ENCODE measurements at regions of chr10 and their contacts with region 1.

Region 1: GRCh38 chr10:101214446-101215396 is 14.5 kb downstream of the LBX1 start:
- H3K4me3 ChIP-seq: no peak overlapping the region
- H3K27ac ChIP-seq: no peak overlapping the region
- H3K4me1 ChIP-seq: no peaks in the 10 kb centered on the region; the same call in 1 of the 2 replicates
- CTCF ChIP-seq: peak; percentile 94

Region 2: DNA sequence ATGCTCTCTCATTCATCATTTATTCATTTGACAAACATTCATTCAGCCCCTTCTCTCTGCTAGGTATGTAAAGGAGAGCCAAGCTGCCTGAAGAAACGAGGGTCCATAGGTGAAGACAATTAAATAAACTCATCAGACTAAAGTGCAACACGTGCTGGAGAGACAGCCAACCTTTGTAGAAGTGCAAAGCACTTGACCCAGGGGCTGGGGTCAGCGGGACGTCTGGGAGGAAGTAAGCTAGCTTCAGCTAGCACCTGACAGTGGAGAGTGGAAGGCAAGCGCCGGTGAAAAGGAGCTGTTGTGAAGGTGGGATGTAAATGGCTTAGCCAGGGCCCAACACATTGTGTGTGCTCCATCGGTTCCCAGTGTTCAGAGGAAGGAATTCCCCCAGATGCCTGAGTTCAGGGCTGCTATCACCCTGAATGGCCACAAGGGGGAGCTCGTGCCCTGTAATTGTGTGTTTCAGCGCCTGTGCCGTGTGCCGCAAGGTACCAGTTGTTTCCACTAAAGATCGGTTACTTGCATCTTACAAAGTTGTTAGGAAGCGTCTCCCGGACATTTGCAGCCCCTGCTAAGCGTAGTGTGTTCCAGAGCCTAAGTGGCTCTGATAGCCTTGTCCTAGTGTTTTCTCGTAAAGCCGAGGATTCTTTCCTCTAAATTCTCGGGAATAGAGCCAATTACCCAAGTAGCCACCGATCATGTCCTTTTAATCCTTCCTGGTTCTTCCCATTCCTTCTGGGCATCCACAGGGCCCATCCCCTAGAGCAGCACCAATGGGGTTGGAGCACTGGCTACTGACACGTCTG is 53.0 kb before region 1 on chr10:
- CTCF ChIA-PET with region 1: interaction called, 27 read pairs
- POLR2A ChIA-PET with region 1: interaction called, 4 read pairs
- H3K4me3 ChIP-seq: peak overlapping the region; percentile 21
- H3K27ac ChIP-seq: no peak overlapping the region
- H3K4me1 ChIP-seq: peaks cover 6% of the 10 kb centered on the region; the same call in 1 of the 2 replicates
- CTCF ChIP-seq: peak; percentile 93

Region 3: DNA sequence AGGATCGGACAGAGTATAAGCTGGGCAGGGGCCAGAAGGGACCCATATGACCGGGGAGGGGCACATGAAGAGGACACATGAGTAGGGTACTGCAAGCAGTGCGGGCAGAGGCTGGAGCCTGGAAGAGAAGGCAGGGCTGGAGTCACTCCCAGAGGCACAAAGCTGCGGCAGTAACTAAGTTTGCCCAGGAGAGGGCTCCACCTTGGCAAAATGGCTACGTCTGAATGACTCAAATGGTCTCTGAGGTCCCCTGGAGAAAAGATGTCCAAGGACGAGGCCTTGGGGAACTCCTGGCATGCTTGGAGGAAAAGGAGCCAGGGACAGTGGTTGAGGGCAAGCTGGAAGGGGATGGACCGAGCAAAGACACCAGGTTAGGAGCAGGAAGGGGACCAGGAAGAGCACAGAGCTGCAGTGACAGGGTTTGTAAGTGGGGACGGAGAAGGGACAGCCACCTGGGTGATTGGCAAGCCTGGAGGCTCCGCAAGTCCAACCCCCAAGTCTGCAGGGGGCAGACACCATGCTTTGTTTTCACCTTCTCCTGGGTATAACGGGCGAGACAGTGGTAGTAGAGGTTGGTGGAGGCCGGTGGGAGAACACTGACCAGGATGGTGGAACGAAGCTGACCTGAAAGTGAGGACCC is 57.6 kb after region 1 on chr10:
- CTCF ChIA-PET with region 1: interaction called, 51 read pairs
- POLR2A ChIA-PET with region 1: no interaction called
- H3K4me3 ChIP-seq: no peak overlapping the region
- H3K27ac ChIP-seq: no peak overlapping the region
- H3K4me1 ChIP-seq: no peaks in the 10 kb centered on the region
- CTCF ChIP-seq: peak; percentile 92

Region 4: GRCh38 chr10:101305320-101306241 is 90.9 kb after region 1 on chr10:
- CTCF ChIA-PET with region 1: interaction called, 22 read pairs
- POLR2A ChIA-PET with region 1: interaction called, 4 read pairs
- H3K4me3 ChIP-seq: no peak overlapping the region
- H3K27ac ChIP-seq: no peak overlapping the region
- H3K4me1 ChIP-seq: no peaks in the 10 kb centered on the region
- CTCF ChIP-seq: no peak

Region 5: DNA sequence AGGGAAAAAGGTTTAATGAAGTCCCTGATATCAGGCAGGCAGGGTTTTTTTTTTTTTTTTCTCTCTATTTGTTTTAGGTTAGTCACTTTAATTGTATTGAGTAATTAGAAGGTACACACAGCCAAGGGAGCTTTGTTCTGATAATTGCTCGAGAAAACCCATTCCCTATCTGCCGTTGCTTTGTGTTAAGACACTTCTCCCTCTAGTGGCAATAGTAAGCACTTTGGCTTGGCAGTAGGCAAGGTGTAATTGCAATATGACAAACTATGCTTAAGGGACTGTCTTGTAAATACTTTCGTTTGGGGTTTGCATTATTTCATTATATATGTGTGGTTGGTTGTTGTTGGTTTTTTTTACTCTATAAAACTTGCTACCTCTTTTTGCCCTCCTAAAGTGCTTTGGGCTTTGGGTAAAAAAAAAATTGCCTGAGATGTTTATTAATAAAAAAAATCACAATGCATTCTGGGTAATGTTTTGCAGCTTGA is 252.6 kb after region 1 on chr10:
- CTCF ChIA-PET with region 1: interaction called, 63 read pairs
- POLR2A ChIA-PET with region 1: no interaction called
- H3K4me3 ChIP-seq: no peak overlapping the region
- H3K27ac ChIP-seq: no peak overlapping the region
- H3K4me1 ChIP-seq: peaks cover 15% of the 10 kb centered on the region
- CTCF ChIP-seq: 0 out of 2 replicates have a peak, but pooled peaks have one; percentile 21

Region 6: GRCh38 chr10:101563497-101564040 is 348.8 kb after region 1 on chr10:
- CTCF ChIA-PET with region 1: interaction called, 16 read pairs
- POLR2A ChIA-PET with region 1: no interaction called
- H3K4me3 ChIP-seq: no peak overlapping the region
- H3K27ac ChIP-seq: no peak overlapping the region
- H3K4me1 ChIP-seq: no peaks in the 10 kb centered on the region
- CTCF ChIP-seq: no peak

Region 7: DNA sequence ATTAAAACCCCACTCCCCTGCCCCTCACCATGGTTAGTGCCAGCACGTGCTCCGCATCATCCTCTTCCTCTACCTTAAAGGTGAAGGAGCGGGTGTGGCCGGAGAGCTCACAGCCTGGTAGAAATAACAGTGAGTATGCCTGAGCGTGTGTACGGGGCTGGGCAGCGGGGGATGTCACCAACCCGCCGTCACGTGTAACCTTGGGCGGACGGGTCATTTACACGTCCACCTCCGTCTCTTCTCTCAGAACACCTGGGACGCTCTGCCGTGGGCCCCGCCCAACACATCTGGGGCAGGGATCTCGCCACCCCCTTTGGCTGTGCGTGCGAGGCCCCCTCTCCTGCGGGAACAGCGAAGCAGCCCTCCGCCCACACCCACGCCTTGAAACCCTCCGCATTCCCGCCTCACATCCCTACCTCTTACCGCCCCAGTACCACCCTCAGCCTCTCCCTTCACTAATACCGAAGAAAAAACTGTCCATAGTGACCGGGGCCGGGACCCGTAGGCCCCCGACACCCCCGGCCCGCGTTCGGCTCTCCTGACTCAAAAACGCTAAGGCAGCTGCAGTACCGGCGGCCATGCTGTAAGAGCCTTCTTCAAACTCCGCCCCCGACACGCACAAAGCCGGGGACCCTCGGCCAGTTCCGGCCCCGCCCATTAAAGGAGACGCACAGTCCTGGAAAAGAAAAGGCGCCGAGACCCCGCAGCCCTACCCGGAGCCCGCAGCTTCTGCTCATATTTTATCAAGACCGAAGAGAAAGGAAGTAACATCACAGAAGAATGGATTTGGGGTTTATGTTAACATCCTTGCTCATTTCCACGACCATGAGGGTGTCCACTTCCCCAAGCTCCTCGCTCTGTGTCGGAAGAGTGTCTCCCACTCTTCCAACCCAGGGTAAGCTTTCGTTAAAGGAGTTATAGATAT is 568.4 kb after region 1 on chr10 and contains the start of gene NPM3:
- CTCF ChIA-PET with region 1: interaction called, 39 read pairs
- POLR2A ChIA-PET with region 1: no interaction called
- H3K4me3 ChIP-seq: peak within 1 kb of the TSS; percentile 81
- H3K27ac ChIP-seq: peak within 1 kb of the TSS; percentile 37
- H3K4me1 ChIP-seq: peaks cover 18% of the 10 kb centered on the region
- CTCF ChIP-seq: no peak

Measured in HEK293 (cell line).